Activated CD8-positive, alpha-beta memory T cell treated with anti-CD3 and anti-CD28 coated beads, Interleukin-2, amount 10 ng/mL, durations not matched to agents 7 days and 5 days (primary cell): ENCODE measurements at regions of chr11 and their contacts with region 1.

Region 1: DNA sequence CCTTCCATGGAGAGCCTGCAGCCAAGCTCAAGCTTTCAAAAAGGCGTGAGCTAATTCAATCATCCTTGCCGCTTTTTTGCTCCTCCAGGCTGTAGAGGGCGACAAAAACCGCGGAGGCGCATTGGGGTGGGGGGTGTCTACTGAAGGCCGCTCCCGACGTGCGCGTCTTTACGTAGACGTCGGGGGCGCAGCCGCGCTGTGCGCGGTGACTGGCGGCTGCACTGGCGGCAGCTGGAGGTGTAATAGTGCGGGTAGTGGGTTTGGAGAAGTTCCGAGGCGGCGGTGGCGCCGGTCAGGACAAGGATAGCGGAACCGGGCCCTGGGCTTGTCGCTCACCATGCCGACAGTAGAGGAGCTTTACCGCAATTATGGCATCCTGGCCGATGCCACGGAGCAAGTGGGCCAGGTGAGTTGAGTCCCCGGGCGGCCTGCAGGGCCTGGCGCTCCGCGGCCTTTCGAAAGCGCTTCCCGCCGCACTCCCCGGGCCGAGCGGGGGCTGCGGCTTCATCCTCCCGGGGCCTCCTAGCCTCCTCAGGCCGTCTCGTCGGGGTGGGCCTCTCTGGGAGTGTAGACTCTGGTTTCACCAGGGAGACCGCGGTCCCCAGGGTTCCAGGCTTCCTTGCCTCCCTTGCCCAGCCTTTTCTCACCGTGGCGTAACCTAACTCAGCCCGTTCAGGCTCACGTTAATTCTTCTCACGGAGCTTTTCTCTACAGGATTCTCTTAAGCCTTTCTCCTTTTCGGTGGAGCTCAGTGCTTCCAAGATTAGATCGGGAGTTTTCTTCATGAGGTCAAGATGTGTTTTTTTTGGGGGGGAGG is at the start of gene API5:
- DNase-seq: peak; percentile 96
- ATAC-seq: peak; percentile 94
- H3K4me3 Mint-ChIP-seq: peak within 1 kb of the TSS; percentile 99
- H3K27ac Mint-ChIP-seq: peak within 1 kb of the TSS; percentile 96
- H3K4me1 Mint-ChIP-seq: peaks cover 47% of the 10 kb centered on the region
- H3K27me3 Mint-ChIP-seq: no peaks in the 10 kb centered on the region
- total RNA-seq, gene API5: 99.5 to 134 TPM

Region 2: GRCh38 chr11:43358801-43359421 is 46.9 kb after region 1 on chr11 and contains the start of gene TTC17:
- CTCF ChIA-PET with region 1: interaction called, 24 read pairs
- DNase-seq: peak; percentile 97
- ATAC-seq: peak; percentile 95
- H3K4me3 Mint-ChIP-seq: peak within 1 kb of the TSS; percentile 88
- H3K27ac Mint-ChIP-seq: peak within 1 kb of the TSS; percentile 96
- H3K4me1 Mint-ChIP-seq: peaks cover 47% of the 10 kb centered on the region
- H3K27me3 Mint-ChIP-seq: no peaks in the 10 kb centered on the region
- total RNA-seq, gene TTC17: 55.7 to 91.9 TPM

Region 3: DNA sequence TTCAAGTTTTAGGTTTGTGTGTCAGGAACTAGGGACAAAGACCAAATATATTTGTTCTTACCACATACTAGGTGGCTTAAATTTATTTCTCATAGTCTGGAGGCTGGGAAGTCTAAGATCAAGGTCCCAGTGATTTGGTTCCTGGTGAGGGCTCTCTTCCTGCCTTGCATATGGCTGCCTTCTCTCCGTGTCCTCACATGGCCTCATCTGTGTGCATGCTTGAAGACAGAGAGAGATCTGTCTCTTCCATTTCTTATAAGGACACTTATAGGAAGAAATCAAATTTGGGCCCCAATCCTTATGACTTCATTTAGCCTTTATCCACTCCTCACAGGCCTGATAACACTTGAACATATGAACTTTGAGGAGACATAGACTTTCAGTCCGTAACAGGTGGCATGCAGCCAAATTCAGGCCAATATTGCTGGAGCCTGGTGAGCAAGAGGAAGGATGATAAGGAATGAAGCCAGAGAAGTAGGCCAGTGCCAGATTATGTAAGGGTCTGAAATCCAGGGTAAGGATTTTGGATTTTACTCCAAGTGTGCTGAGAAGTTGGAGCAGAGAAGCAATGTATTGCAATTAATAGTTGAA is 81.9 kb after region 1 on chr11:
- CTCF ChIA-PET with region 1: interaction called, 11 read pairs
- DNase-seq: no peak
- ATAC-seq: no peak
- H3K4me3 Mint-ChIP-seq: no peak overlapping the region
- H3K27ac Mint-ChIP-seq: peak overlapping the region; percentile 46
- H3K4me1 Mint-ChIP-seq: peaks cover 56% of the 10 kb centered on the region
- H3K27me3 Mint-ChIP-seq: no peaks in the 10 kb centered on the region

Region 4: GRCh38 chr11:43419460-43419859 is 107.5 kb after region 1 on chr11:
- CTCF ChIA-PET with region 1: interaction called, 67 read pairs
- DNase-seq: peak; percentile 70
- ATAC-seq: peak; percentile 80
- H3K4me3 Mint-ChIP-seq: no peak overlapping the region
- H3K27ac Mint-ChIP-seq: peak overlapping the region; percentile 60
- H3K4me1 Mint-ChIP-seq: peaks cover 6% of the 10 kb centered on the region
- H3K27me3 Mint-ChIP-seq: no peaks in the 10 kb centered on the region